ENCODE measurements at regions of chr1 and their contacts with region 1.

Region 1: DNA sequence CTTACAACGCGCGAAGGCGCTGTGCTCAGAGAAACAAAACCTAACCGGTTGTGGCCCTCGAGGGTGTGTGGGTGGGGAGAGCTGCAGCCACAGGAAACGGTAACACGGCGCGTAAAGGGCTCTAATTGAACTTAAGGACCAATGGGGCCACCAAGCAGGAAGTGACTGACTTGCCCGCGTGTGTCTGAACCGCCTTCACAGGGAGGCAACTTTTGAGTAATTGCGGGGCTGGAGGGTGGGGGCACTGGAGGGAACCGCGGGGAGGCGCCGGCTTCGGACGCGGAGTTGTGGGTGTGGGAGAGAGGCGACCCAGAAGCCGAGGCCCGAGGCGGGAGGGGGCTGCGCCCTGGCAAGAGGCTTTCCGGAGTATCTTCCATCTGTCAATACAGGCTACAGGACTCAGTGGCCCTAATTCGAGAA is 577 bp upstream of the PNRC2 start:
- DNase-seq: peak; percentile 84 to 89
- ATAC-seq: peak; percentile 74 to 83 (median 80)
- H3K4me3 ChIP-seq: peak overlapping the region; percentile 88
- H3K27ac ChIP-seq: peak overlapping the region; percentile 100
- H3K4me1 ChIP-seq: peaks cover 28% of the 10 kb centered on the region
- H3K27me3 ChIP-seq: no peaks in the 10 kb centered on the region
- CTCF ChIP-seq: peak; percentile 13

Region 2: DNA sequence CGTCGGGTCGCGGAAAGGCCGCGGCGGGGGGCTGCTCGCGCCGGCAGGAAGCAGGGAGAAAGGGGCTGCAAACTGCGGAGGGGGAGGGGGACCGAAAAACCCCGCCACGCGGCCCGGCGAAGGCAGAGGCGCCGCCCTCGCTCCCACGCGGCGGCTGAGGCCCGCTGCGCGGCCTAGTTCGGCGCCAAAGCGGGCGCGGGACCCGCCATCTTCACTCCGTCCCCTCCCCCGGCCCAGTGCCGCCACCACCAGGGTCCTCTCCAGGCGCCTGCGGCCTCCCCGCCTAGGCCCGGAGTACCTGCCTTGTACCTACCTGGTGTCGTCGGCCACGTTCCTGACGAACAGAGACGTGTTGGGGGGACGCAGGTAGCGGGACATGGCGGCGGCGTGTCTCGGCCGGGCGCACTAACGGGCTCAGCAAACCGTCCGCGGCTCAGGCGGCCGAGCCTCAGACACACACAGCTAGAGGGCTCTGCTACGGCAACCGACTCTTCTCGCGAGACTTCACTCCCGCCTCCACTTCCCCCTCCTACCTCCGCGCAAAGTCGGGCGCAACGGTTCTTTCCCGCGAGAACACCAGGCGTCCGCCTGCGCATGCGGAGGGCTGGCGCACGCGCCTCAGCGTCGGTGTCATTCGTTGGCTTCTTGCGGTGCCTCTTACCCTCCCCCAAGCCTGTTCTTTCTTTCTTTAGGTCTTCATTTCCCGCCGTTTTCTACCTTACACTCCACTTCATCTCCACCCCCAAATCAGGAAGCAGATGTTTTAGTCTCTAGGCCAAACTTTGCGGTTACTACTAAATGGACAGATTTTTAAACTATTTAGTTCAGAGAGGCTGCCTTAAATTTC is 21.1 kb after region 1 on chr1 and contains the start of gene SRSF10:
- intact Hi-C with region 1: loop called in 1 of 2 experiments (anchors 1 kb)
- DNase-seq: peak; percentile 97 to 99
- ATAC-seq: peak; percentile 98 to 99 (median 98)
- H3K4me3 ChIP-seq: peak within 1 kb of the TSS; percentile 88
- H3K27ac ChIP-seq: peak within 1 kb of the TSS; percentile 97
- H3K4me1 ChIP-seq: peaks cover 36% of the 10 kb centered on the region
- H3K27me3 ChIP-seq: no peaks in the 10 kb centered on the region
- CTCF ChIP-seq: peak; percentile 34
- total RNA-seq, gene SRSF10: 29.5 to 54.0 (median 46.7) TPM

Region 3: GRCh38 chr1:24018611-24019580 is 59.8 kb after region 1 on chr1:
- intact Hi-C with region 1: loop called in 1 of 2 experiments (anchors 5 kb)
- DNase-seq: peak; percentile 95 to 96
- ATAC-seq: peak; percentile 77 to 85 (median 80)
- H3K4me3 ChIP-seq: peak overlapping the region; percentile 7
- H3K27ac ChIP-seq: peak overlapping the region; percentile 92
- H3K4me1 ChIP-seq: peaks cover 61% of the 10 kb centered on the region
- H3K27me3 ChIP-seq: no peaks in the 10 kb centered on the region
- CTCF ChIP-seq: no peak

Region 4: DNA sequence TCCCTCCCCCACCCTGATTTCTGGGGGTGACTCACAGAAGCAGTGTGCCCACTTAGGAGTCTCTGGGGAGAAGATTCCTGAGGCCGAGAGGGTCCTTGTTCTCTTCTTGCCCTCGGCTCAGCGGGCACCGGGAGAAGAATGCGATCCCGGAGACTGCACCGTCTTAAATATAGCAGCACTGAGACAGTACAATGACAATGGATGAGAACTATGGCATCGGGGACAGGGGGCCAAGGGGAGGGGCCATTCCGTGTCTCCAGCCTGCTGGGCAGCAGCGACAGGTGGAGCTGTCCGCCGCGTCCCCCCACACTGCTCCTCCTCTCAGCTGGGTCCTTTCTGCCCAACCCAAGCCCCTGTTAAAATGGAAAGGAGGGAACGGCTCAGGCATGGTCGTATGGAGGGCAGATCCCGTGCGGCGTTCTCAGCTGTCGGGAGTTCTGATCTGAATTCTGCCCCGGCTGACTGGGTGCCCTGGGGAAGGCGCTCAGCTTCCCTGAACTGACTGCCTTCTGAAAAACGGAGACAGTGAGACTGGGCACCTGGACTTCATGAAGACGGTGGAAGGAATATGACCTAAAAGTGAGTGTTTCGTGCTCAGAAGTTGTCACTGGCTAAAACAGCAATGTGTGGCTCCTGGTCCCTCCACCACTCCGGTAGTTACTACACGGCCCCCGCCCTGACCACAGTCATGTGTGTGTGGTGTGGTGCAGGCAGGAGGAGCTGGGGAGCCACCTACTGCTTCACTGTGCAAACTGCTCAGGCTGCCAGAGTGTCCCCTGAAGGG is 153.1 kb after region 1 on chr1 and contains the start of gene MYOM3:
- intact Hi-C with region 1: loop called (anchors 10 kb)
- DNase-seq: peak; percentile 81 to 91
- ATAC-seq: peak; percentile 71 to 81 (median 76)
- H3K4me3 ChIP-seq: peak within 1 kb of the TSS; percentile 67
- H3K27ac ChIP-seq: peak within 1 kb of the TSS; percentile 91
- H3K4me1 ChIP-seq: peaks cover 41% of the 10 kb centered on the region
- H3K27me3 ChIP-seq: no peaks in the 10 kb centered on the region
- CTCF ChIP-seq: peak; percentile 53
- total RNA-seq, gene MYOM3: 130 to 505 (median 308) TPM

Region 5: DNA sequence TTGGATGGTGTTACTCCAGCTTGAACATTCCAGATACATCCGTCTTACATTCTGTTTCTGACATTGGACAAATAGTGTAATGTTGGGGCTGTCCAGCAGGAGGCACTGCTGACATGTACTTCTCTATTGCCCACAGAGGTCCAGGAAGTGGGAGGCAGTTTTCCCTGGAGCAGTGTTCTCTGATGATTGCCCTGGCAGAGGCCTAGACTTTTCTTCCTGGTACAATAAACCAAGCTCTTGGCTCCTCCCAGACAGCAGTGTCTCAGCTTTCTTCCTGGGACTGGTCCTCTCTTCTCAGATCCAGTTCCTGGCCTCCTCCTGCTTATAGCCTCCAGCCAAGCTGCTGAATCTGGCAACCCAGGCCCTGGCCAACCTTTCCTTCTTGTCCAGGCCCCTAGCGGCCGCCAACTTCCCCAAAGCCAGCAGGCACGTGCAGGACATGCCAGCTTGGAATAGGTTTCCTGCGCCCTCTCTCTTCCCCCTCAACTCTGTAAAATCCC is 242.9 kb after region 1 on chr1:
- intact Hi-C with region 1: no loop called
- DNase-seq: peak; percentile 72 to 76
- ATAC-seq: peak; percentile 80 to 87 (median 85)
- H3K4me3 ChIP-seq: no peak overlapping the region
- H3K27ac ChIP-seq: no peak overlapping the region
- H3K4me1 ChIP-seq: no peaks in the 10 kb centered on the region
- H3K27me3 ChIP-seq: peaks cover 0 to 6% (median 0%) of the 10 kb centered on the region in 3 donors
- CTCF ChIP-seq: peak; percentile 81

Region 6: DNA sequence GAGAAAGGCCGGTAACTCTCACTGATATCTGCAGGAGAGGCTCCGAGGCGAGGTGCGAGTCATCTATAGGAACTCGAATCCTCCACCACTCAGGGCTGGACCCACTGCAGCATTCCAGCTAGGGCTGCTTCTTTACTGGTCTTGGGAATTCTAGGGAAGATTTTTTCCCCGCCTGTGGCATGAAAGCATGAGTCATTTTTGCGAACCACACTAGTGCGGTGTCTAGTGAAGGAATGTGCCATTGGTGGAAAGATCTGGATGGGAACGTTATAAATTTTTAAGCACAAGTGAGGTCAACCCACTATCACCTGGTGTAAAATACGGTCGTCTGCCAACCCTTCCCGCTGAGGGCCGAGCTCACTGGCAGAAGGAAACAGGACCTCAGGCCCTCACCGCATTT is 1223.6 kb after region 1 on chr1:
- intact Hi-C with region 1: no loop called
- DNase-seq: no peak
- ATAC-seq: no peak
- H3K4me3 ChIP-seq: no peak overlapping the region
- H3K27ac ChIP-seq: no peak overlapping the region
- H3K4me1 ChIP-seq: no peaks in the 10 kb centered on the region
- H3K27me3 ChIP-seq: peaks cover 0 to 7% (median 0%) of the 10 kb centered on the region in 3 donors
- CTCF ChIP-seq: no peak